ENCODE measurements at regions of chr10 and their contacts with region 1.

Region 1: GRCh38 chr10:119178372-119179119 is at the start of gene PRDX3:
- DNase-seq: peak; percentile 81 to 96 (median 89)
- ATAC-seq: peak; percentile 100
- H3K4me3 ChIP-seq: peak within 1 kb of the TSS; percentile 97
- H3K4me3 Mint-ChIP-seq: peak within 1 kb of the TSS; percentile 91 to 99 (median 96)
- H3K27ac ChIP-seq: peak within 1 kb of the TSS; percentile 79
- H3K27ac Mint-ChIP-seq: peak within 1 kb of the TSS; percentile 86 to 98 (median 93)
- H3K4me1 ChIP-seq: peaks cover 7 to 13% of the 10 kb centered on the region in 2 donors
- H3K4me1 Mint-ChIP-seq: peaks cover 13 to 48% (median 36%) of the 10 kb centered on the region in 7 donors
- H3K27me3 ChIP-seq: no peaks in the 10 kb centered on the region
- H3K27me3 Mint-ChIP-seq: no peaks in the 10 kb centered on the region
- total RNA-seq, gene PRDX3: 11.7 to 120 (median 35.4) TPM

Region 2: GRCh38 chr10:119080521-119081260 is 97.9 kb before region 1 on chr10 and contains the start of gene EIF3A:
- CTCF ChIA-PET with region 1: no interaction called
- POLR2A ChIA-PET with region 1: no interaction called
- intact Hi-C with region 1: loop called (anchors 1 kb)
- DNase-seq: peak; percentile 87 to 98 (median 93)
- ATAC-seq: peak; percentile 90
- H3K4me3 ChIP-seq: peak within 1 kb of the TSS; percentile 83
- H3K4me3 Mint-ChIP-seq: peak within 1 kb of the TSS; percentile 86 to 99 (median 98)
- H3K27ac ChIP-seq: peak within 1 kb of the TSS; percentile 91
- H3K27ac Mint-ChIP-seq: peak within 1 kb of the TSS; percentile 93 to 100 (median 98)
- H3K4me1 ChIP-seq: peaks cover 6 to 26% of the 10 kb centered on the region in 2 donors
- H3K4me1 Mint-ChIP-seq: peaks cover 28 to 55% (median 45%) of the 10 kb centered on the region in 7 donors
- H3K27me3 ChIP-seq: no peaks in the 10 kb centered on the region
- H3K27me3 Mint-ChIP-seq: peaks cover 0 to 2% (median 0%) of the 10 kb centered on the region in 5 donors
- total RNA-seq, gene EIF3A: 87.8 to 137 (median 96.0) TPM

Region 3: DNA sequence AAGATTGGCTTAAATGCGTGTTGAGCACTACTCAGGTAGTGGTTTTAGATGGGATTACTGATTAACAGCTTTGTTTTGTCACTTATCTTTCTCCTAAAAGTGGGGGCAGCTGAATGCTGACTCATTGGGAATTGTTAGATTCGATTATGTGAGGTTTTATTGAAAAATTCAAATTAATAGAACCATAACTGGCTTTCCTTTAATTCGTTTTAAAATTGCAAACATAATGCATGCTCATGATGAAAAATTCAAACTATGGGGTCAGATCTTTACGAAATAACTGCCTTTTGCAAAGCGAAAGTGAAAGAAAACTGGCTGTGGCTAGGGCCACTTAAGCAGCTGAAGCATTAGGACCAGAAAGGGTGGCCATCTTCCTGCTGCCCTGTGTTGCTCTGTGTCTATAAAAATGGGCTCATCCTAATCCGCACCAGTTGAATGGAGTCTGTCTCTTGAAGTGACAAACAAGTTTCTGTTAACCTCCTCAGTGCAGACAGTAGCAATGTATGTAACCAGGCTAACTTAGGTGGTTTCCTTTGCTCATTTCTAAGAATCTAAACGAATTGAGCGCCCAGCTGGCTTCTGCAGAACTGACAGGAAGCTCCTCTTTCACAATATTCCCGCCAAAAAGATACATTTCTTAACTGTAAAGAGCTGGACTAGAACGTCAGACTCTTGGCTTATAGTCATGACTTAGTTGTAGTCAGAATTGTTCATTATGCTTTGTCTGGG is 46.9 kb before region 1 on chr10:
- CTCF ChIA-PET with region 1: no interaction called
- POLR2A ChIA-PET with region 1: no interaction called
- intact Hi-C with region 1: loop called in 1 of 2 experiments (anchors 2 kb)
- DNase-seq: peak in 8 of 9 donors; percentile 24 to 61 (median 40)
- ATAC-seq: peak; percentile 77
- H3K4me3 ChIP-seq: peak overlapping the region; percentile 73
- H3K4me3 Mint-ChIP-seq: peak overlapping the region; percentile 81 to 96 (median 91)
- H3K27ac ChIP-seq: peak overlapping the region; percentile 66
- H3K27ac Mint-ChIP-seq: peak overlapping the region; percentile 92 to 97 (median 95)
- H3K4me1 ChIP-seq: peaks cover 8 to 16% of the 10 kb centered on the region in 2 donors
- H3K4me1 Mint-ChIP-seq: peaks cover 16 to 59% (median 32%) of the 10 kb centered on the region in 7 donors
- H3K27me3 ChIP-seq: no peaks in the 10 kb centered on the region
- H3K27me3 Mint-ChIP-seq: no peaks in the 10 kb centered on the region

Region 4: GRCh38 chr10:119189811-119190282 is 11.3 kb after region 1 on chr10:
- CTCF ChIA-PET with region 1: no interaction called
- POLR2A ChIA-PET with region 1: interaction called, 4 read pairs
- intact Hi-C with region 1: loop called in 1 of 2 experiments (anchors 1 kb)
- DNase-seq: no peak
- ATAC-seq: peak; percentile 46
- H3K4me3 ChIP-seq: no peak overlapping the region
- H3K4me3 Mint-ChIP-seq: peak overlapping the region in 1 of 10 donors; percentile 30
- H3K27ac ChIP-seq: no peak overlapping the region
- H3K27ac Mint-ChIP-seq: peak overlapping the region in 1 of 9 donors; percentile 12
- H3K4me1 ChIP-seq: peaks cover 4 to 6% of the 10 kb centered on the region in 2 donors
- H3K4me1 Mint-ChIP-seq: peaks cover 9 to 37% (median 12%) of the 10 kb centered on the region in 7 donors
- H3K27me3 ChIP-seq: no peaks in the 10 kb centered on the region
- H3K27me3 Mint-ChIP-seq: no peaks in the 10 kb centered on the region

Region 5: GRCh38 chr10:119872860-119873681 is 694.5 kb after region 1 on chr10:
- CTCF ChIA-PET with region 1: no interaction called
- POLR2A ChIA-PET with region 1: no interaction called
- intact Hi-C with region 1: loop called in 1 of 2 experiments (anchors 1 kb)
- DNase-seq: peak; percentile 81 to 88 (median 86)
- ATAC-seq: peak; percentile 96
- H3K4me3 ChIP-seq: peak overlapping the region; percentile 97
- H3K4me3 Mint-ChIP-seq: peak overlapping the region; percentile 82 to 92 (median 89)
- H3K27ac ChIP-seq: peak overlapping the region; percentile 84
- H3K27ac Mint-ChIP-seq: peak overlapping the region; percentile 79 to 95 (median 92)
- H3K4me1 ChIP-seq: peaks cover 21 to 28% of the 10 kb centered on the region in 2 donors
- H3K4me1 Mint-ChIP-seq: peaks cover 23 to 46% (median 41%) of the 10 kb centered on the region in 7 donors
- H3K27me3 ChIP-seq: no peaks in the 10 kb centered on the region
- H3K27me3 Mint-ChIP-seq: peaks cover 0 to 6% (median 0%) of the 10 kb centered on the region in 5 donors

Region 6: GRCh38 chr10:119933179-119933578 is 754.6 kb after region 1 on chr10:
- CTCF ChIA-PET with region 1: no interaction called
- POLR2A ChIA-PET with region 1: no interaction called
- intact Hi-C with region 1: no loop called
- DNase-seq: no peak
- ATAC-seq: no peak
- H3K4me3 ChIP-seq: no peak overlapping the region
- H3K4me3 Mint-ChIP-seq: no peak overlapping the region
- H3K27ac ChIP-seq: no peak overlapping the region
- H3K27ac Mint-ChIP-seq: no peak overlapping the region
- H3K4me1 ChIP-seq: peaks cover 0 to 6% of the 10 kb centered on the region in 2 donors
- H3K4me1 Mint-ChIP-seq: peaks cover 4 to 24% (median 7%) of the 10 kb centered on the region in 7 donors
- H3K27me3 ChIP-seq: no peaks in the 10 kb centered on the region
- H3K27me3 Mint-ChIP-seq: no peaks in the 10 kb centered on the region

Measured in naive thymus-derived CD4-positive, alpha-beta T cell (primary cell).